ENCODE measurements at regions of chr14 and their contacts with region 1.

Region 1: DNA sequence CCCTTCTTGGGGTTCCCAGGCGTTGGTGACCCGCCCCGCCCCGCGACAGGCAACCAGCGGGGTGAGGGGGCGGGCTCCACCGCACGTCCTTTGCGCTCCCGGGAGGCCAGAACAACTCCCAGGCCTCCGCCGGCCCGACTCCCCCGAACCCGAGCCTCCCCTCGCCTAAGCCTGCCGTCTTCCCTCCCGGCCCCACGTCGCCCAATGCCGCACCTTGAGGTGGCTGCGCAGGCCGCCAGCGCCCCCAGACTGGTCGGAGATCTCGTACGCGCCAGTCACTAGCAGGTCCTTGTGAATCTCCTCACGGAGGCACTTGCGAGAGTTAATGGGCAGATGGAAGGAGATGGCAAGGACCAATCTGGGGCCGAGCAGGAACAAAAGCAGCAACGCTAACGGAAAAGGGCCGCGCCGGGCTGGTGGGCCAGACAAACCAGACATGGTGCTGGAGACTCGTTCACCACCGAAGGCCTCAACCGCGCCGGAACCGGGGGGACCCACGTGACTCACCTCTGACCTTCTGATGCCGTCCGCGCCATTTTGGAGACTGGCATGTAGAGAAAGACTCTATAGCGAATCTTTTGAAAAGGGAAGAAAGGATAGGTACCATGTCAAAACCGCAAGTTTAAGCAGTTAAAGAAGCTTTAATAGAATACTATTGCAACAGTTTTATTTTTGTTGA is at the start of gene TMED10:
- DNase-seq: peak; percentile 95
- ATAC-seq: peak; percentile 81
- H3K4me3 Mint-ChIP-seq: peak within 1 kb of the TSS; percentile 94
- H3K27ac Mint-ChIP-seq: peak within 1 kb of the TSS; percentile 95
- H3K4me1 Mint-ChIP-seq: peaks cover 39% of the 10 kb centered on the region
- H3K27me3 Mint-ChIP-seq: no peaks in the 10 kb centered on the region
- total RNA-seq, gene TMED10: 179 to 253 TPM

Region 2: GRCh38 chr14:74516451-74517155 is 659.7 kb before region 1 on chr14:
- CTCF ChIA-PET with region 1: no interaction called
- POLR2A ChIA-PET with region 1: no interaction called
- intact Hi-C with region 1: no loop called
- DNase-seq: no peak
- ATAC-seq: no peak
- H3K4me3 Mint-ChIP-seq: no peak overlapping the region
- H3K27ac Mint-ChIP-seq: no peak overlapping the region
- H3K4me1 Mint-ChIP-seq: peaks cover 7% of the 10 kb centered on the region
- H3K27me3 Mint-ChIP-seq: peaks cover 8% of the 10 kb centered on the region

Region 3: DNA sequence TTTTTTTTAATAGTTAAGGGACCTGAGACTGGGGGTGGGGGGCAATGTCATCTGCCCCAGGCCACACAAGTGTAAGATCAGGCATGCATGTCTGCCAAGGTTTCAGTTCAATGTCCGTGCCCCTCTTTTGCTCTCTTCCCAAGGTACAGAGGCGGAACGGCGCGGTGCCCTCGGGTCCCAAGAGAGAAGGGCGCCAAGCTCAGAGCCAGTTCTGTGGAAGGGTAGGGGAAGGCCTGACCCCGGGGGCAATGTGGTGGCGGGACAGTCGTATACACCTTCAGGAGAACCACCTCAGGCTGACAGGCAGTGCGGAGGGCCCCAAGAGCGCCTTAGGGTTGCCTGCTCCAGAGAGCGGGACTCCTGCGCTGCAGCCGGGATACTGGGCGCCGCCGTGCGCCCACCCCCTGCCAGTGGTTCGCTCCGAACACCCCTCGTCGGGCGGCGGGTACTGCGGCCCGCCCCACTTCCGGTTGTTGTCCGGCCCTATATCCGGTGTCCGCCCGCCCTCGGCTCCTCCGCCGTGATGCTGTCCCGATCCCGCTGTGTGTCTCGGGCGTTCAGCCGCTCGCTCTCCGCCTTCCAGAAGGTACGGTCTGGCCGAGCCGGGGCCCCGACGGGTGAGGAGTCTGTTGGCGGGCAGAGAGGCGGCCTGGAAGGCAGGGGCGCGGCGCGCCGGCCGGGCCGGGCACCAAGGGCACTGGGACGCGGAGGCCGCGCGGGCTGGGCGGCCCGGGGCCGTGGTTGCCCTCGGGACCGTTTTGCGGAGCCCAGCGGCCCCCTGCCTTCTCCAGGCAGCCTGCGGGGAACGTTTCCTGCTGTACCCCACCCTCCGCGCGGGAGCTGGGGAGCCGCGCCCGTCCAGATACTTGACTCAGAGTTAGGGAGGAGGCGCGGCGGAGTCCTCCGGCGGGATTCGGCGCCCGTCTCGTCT is 294.6 kb before region 1 on chr14 and contains the start of gene DLST:
- CTCF ChIA-PET with region 1: no interaction called
- POLR2A ChIA-PET with region 1: no interaction called
- intact Hi-C with region 1: loop called in 1 of 2 experiments (anchors 5 kb)
- DNase-seq: peak; percentile 92
- ATAC-seq: peak; percentile 89
- H3K4me3 Mint-ChIP-seq: peak within 1 kb of the TSS; percentile 99
- H3K27ac Mint-ChIP-seq: peak within 1 kb of the TSS; percentile 96
- H3K4me1 Mint-ChIP-seq: peaks cover 64% of the 10 kb centered on the region
- H3K27me3 Mint-ChIP-seq: no peaks in the 10 kb centered on the region
- total RNA-seq, gene DLST: 103 to 120 TPM

Region 4: DNA sequence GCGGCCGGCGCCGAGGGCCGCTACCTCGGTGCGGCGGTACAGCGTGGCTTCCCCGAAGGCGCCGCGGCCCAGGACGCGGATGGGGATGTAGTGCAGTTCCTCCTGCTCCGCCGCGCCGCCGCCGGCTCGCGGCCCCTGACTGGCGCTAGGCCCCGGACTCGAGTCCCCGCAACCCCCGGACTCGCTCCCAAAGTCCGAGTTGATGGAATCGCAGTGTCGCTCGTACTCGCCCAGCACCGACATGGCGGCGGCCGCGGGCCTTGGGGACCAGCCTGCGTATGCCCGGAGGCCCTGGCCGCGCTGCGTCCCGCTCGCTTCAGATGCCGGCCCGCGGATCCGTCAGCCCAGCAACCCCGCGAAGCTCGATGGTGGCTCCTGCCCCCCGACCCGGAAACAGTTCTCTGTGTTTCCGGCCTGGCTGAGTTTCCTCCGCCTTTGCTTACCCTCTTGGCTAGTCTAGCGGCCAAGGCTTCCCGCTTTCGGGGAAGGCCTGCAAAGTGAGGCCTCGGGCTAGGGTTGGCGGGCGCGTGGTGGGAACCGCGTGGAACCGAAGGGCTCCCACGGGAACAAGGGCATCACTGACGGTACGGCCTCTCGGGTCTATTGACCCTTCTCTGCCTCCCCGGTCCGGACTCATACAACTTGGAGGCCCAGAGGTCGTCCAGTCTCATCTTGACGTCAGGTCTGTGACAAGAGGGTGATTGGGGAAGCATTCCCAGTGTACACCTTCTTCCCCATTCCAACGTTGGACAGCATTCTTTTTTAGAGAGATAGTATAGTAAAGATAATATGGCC is 49.4 kb before region 1 on chr14 and contains the start of gene NEK9:
- CTCF ChIA-PET with region 1: no interaction called
- POLR2A ChIA-PET with region 1: interaction called, 3 read pairs
- intact Hi-C with region 1: loop called in 1 of 2 experiments (anchors 1 kb)
- DNase-seq: peak; percentile 94
- ATAC-seq: peak; percentile 90
- H3K4me3 Mint-ChIP-seq: peak within 1 kb of the TSS; percentile 97
- H3K27ac Mint-ChIP-seq: peak within 1 kb of the TSS; percentile 98
- H3K4me1 Mint-ChIP-seq: peaks cover 41% of the 10 kb centered on the region
- H3K27me3 Mint-ChIP-seq: no peaks in the 10 kb centered on the region
- total RNA-seq, gene NEK9: 45.2 to 58.7 TPM

Region 5: DNA sequence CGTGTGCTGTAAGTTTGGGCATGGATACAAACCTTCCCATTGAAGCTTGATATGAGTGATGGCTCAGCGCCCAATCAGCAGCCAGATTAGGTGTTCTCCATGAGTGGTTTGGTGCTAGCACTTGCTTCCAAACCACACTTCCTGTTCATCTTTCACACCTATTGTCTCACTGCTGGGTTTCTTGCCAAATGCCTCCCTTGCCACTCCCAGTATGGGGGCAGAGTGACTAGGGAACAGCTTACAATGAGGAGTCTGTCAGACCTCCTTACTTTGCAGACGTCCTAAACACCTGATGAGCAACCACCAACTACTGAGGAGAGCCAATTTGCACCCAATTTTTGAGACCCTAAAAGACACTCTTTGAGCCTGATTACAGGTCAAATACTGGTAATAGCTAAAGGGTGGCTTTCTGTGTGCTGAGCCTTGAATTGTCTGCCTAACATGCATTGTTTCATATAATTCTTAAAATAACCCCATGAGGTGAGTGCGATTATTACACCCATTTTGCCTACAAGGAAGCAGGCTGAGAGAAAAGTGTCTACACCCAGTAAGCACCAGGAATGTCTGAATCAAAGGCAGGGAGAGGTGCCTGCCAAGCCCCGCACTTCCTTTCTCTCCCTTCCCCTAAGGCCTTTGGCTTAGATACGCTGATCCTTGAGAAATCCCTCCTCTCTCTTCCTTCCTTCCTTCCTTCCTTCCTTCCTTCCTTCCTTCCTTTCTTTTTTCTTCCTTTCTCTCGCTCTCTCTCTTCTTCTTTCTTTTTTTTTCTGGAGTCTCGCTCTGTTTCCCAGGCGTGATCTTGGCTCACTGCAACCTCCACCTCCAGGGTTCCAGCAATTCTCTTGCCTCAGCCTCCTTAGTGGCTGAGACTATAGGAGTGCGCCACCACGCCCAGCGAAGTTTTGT is 54.1 kb after region 1 on chr14:
- CTCF ChIA-PET with region 1: no interaction called
- POLR2A ChIA-PET with region 1: no interaction called
- intact Hi-C with region 1: loop called in 1 of 2 experiments (anchors 5 kb)
- DNase-seq: peak; percentile 64
- ATAC-seq: peak; percentile 79
- H3K4me3 Mint-ChIP-seq: no peak overlapping the region
- H3K27ac Mint-ChIP-seq: peak overlapping the region; percentile 1
- H3K4me1 Mint-ChIP-seq: peaks cover 60% of the 10 kb centered on the region
- H3K27me3 Mint-ChIP-seq: no peaks in the 10 kb centered on the region

Region 6: GRCh38 chr14:75278422-75279161 is 102.3 kb after region 1 on chr14 and contains the start of gene FOS:
- CTCF ChIA-PET with region 1: no interaction called
- POLR2A ChIA-PET with region 1: interaction called, 3 read pairs
- intact Hi-C with region 1: loop called (anchors 1 kb)
- DNase-seq: peak; percentile 92
- ATAC-seq: peak; percentile 91
- H3K4me3 Mint-ChIP-seq: peak within 1 kb of the TSS; percentile 85
- H3K27ac Mint-ChIP-seq: peak within 1 kb of the TSS; percentile 95
- H3K4me1 Mint-ChIP-seq: peaks cover 44% of the 10 kb centered on the region
- H3K27me3 Mint-ChIP-seq: peaks cover 24% of the 10 kb centered on the region
- total RNA-seq, gene FOS: 16.0 to 21.1 TPM

Region 7: GRCh38 chr14:75531660-75532317 is 355.5 kb after region 1 on chr14:
- CTCF ChIA-PET with region 1: no interaction called
- POLR2A ChIA-PET with region 1: no interaction called
- intact Hi-C with region 1: no loop called
- DNase-seq: no peak
- ATAC-seq: no peak
- H3K4me3 Mint-ChIP-seq: peak overlapping the region; percentile 30
- H3K27ac Mint-ChIP-seq: peak overlapping the region; percentile 77
- H3K4me1 Mint-ChIP-seq: peaks cover 77% of the 10 kb centered on the region
- H3K27me3 Mint-ChIP-seq: no peaks in the 10 kb centered on the region

Region 8: DNA sequence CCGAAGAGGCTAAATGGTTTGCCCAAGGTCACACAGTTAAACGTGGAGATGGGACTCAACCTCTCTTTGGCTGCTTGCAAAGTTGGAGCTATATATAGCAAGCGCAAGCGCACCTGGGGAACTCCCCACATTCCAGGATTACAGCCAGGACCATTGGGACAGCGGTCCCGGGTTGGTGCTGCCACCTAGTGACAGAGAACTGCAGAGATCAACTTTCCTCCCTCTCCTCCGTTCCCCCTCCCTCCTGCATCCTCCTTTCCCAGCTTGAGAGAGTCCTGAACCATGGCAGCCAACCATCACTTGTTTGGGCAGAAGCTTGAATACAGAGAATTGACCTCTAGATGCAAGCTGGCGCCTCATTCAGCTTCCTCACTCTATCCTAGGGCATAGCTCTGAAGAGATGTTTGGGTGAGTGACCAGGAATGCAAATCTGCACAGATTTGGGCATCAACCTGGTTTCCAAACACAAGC is 384.7 kb after region 1 on chr14:
- CTCF ChIA-PET with region 1: no interaction called
- POLR2A ChIA-PET with region 1: no interaction called
- intact Hi-C with region 1: loop called in 1 of 2 experiments (anchors 1 kb)
- DNase-seq: peak; percentile 71
- ATAC-seq: no peak
- H3K4me3 Mint-ChIP-seq: peak overlapping the region; percentile 13
- H3K27ac Mint-ChIP-seq: peak overlapping the region; percentile 88
- H3K4me1 Mint-ChIP-seq: peaks cover 82% of the 10 kb centered on the region
- H3K27me3 Mint-ChIP-seq: no peaks in the 10 kb centered on the region

Region 9: GRCh38 chr14:76151398-76152339 is 975.4 kb after region 1 on chr14 and contains the start of gene GPATCH2L:
- CTCF ChIA-PET with region 1: no interaction called
- POLR2A ChIA-PET with region 1: no interaction called
- intact Hi-C with region 1: loop called in 1 of 2 experiments (anchors 1 kb)
- DNase-seq: peak; percentile 98
- ATAC-seq: peak; percentile 92
- H3K4me3 Mint-ChIP-seq: peak within 1 kb of the TSS; percentile 92
- H3K27ac Mint-ChIP-seq: peak within 1 kb of the TSS; percentile 95
- H3K4me1 Mint-ChIP-seq: peaks cover 46% of the 10 kb centered on the region
- H3K27me3 Mint-ChIP-seq: no peaks in the 10 kb centered on the region
- total RNA-seq, gene GPATCH2L: 43.0 to 47.2 TPM

Measured in activated CD4-positive, alpha-beta T cell treated with anti-CD3 and anti-CD28 coated beads for 36 hours (primary cell).